Breast epithelium (tissue), 4 donors: ENCODE measurements at regions of chr4 and their contacts with region 1.

Region 1: DNA sequence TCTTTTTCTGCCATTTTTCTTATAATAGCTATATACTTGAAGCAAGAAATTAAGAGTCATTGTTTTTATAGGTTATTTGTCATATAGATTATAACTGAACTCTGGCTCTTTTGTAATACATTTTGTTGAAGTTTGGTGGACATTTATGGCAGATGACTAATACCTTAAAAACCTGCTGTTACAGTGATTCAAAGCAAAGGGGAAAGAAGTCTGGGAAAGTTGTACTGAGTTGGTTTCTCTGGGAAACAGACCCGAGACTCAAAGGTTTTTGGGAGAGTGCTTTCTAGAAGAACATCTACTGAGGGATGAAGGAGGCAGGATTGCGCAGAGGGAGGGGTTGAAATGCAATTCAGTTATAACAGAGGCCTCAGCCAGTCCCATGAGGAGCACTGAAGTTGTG is 35.9 kb downstream of the NAP1L5 start:
- DNase-seq: no peak
- H3K4me3 ChIP-seq: no peak overlapping the region
- H3K27ac ChIP-seq: no peak overlapping the region
- H3K4me1 ChIP-seq: no peaks in the 10 kb centered on the region
- H3K27me3 ChIP-seq: no peaks in the 10 kb centered on the region
- CTCF ChIP-seq: no peak
- POLR2A ChIP-seq: no peak

Region 2: DNA sequence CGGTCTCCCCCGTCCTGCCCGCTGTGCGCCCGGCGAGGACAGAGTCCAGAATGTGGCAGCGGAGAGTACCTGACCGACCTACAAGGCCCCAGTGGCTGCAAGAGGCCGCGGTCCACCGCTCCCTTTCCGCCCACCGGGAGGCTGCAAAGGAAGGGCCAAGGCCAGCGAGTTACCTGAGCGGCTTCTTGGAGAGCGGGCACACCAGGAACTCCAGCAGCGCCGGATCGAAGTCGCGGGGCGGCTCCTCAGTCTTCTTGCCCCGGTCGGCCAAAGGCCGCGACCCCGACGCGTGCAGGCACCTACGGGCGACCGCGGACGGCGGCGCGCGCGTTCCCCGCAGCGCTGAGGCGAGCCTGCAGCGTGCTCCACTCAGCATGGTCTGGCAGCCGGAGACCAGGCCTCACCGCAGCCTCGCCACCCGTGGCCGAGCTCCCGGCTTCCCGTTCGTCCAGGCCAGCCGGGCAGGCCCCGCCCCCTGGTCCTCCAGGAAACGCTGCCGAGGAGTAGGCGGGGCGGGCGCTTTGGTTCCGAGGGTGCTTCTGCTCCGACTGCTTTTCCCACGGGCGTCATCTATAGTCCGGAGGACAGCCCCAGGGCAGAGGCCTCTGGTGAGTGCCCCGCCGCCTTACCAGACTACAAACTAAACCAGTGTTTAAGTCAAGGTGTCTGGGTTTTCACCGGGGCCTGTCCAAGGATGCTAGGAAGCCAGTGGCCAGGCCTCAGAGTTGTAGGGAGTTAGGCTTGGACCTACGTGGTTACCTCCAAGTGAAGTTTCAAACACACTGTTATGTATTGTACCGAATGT is 138.2 kb before region 1 on chr4 and contains the start of gene PYURF:
- intact Hi-C with region 1: loop called (anchors 10 kb)
- DNase-seq: peak; percentile 93
- H3K4me3 ChIP-seq: peak within 1 kb of the TSS; percentile 63 to 95 (median 87)
- H3K27ac ChIP-seq: peak within 1 kb of the TSS; percentile 89 to 98
- H3K4me1 ChIP-seq: peaks cover 0 to 11% of the 10 kb centered on the region in 2 donors
- H3K27me3 ChIP-seq: no peaks in the 10 kb centered on the region
- CTCF ChIP-seq: peak in 1 of 3 donors; percentile 15
- POLR2A ChIP-seq: peak; percentile 53
- total RNA-seq, gene PYURF: 93.7 to 116 (median 110) TPM

Region 3: GRCh38 chr4:88646528-88647280 is 15.0 kb before region 1 on chr4:
- intact Hi-C with region 1: no loop called
- DNase-seq: no peak
- H3K4me3 ChIP-seq: no peak overlapping the region
- H3K27ac ChIP-seq: no peak overlapping the region
- H3K4me1 ChIP-seq: no peaks in the 10 kb centered on the region
- H3K27me3 ChIP-seq: no peaks in the 10 kb centered on the region
- CTCF ChIP-seq: no peak
- POLR2A ChIP-seq: no peak

Region 4: DNA sequence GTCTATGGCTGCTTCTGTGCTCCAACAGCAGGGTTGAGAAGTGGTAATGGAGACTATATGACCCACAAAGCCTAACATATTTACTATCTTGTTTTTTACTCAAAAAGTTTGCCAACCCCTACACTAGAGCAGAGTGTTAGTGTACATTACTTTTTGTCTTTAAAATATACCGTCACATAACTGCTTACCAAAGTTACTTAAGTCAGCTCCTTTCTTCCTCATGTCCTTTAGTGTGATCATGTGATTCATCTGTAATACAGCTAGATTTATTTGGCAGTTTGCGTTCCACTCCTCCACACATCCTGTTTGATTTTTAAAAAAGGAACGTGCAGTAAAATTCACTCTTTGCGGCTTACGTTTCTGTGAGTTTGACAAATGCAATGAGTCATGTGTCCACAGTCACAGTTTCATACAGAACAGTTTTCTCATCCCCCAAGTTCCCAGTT is 808.2 kb after region 1 on chr4:
- intact Hi-C with region 1: no loop called
- DNase-seq: no peak
- H3K4me3 ChIP-seq: peak overlapping the region in 1 of 3 donors; percentile 35
- H3K27ac ChIP-seq: no peak overlapping the region
- H3K4me1 ChIP-seq: no peaks in the 10 kb centered on the region
- H3K27me3 ChIP-seq: no peaks in the 10 kb centered on the region
- CTCF ChIP-seq: no peak
- POLR2A ChIP-seq: no peak